ENCODE measurements at regions of chr21 and their contacts with region 1.

Region 1: DNA sequence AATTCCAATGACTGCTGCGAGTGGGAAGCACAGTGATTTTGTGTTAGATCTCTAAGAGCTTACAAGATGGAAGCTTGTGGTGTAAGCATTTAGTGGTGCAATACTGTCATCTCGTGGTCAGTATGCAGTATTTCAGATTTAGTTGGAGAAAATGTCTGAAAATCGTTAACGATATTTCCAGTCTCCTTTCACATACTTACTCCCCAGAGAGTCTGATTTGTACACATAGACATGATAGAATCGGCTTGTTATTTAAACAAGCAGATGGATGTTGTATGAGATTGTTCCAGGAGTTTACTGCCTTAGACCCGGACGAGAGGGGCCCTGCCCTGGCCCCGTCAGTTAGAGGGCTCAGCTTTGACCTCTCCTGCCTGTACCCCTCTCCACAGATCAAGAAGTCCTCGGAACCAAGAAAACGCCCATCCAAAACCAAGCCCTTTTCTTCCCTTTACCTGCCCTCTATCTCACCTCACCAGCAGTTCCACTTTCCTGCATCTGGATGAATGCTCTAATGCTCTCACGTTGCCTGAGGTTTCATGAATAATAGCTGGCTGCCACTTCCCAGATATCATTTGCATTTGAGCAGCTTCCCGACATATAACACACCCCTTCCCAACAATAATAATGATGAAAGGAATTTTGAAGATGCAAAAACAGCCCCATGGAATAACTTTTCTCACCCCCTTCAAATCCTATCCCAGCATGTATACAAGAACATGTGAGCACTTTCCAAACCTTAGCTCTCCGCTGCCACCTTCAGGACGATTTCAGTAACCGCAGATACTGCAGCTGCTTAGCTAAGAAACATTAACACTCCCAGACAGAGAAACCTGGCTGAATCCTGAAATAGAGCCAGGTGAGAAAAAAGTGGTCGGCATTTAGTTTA is 247.3 kb downstream of the LTN1 start:
- DNase-seq: peak; percentile 45
- CTCF ChIP-seq: peak; percentile 82

Region 2: GRCh38 chr21:26842976-26843932 is 1902.1 kb before region 1 on chr21:
- in situ Hi-C with region 1: loop called (anchors 25 kb)
- DNase-seq: no peak
- CTCF ChIP-seq: no peak

Region 3: DNA sequence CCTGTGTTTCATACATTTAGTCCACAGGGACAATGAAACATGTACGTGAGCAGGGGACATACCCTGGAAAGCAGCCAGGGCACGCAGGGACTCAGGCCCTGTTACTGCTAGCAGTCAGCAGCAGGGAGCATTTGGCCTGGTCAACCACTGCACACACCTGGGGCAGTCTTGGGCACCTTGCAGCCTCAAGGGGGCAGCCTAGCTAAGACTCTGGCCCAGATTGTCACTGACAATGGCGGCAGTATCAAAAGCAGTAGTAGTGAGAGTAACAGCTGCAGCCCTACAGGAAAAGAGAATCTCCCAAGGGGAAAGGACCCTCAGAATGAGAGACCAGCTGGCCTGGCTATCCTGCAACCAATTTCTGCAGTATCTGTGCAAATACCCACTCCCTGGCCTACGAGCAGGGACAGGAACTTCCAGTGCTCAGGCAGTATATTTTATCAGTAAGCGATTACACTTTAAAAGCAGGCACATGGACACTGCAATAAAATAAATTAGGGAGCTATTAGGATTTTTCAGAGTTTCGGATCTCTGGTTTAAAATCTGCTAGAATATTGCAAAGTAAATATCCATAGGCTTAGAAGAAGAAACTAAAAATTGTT is 228.3 kb before region 1 on chr21:
- in situ Hi-C with region 1: loop called (anchors 25 kb)
- DNase-seq: peak; percentile 27
- CTCF ChIP-seq: peak; percentile 77

Measured in GM13977 (cell line).